ENCODE measurements at regions of chr13 and their contacts with region 1.

Region 1: DNA sequence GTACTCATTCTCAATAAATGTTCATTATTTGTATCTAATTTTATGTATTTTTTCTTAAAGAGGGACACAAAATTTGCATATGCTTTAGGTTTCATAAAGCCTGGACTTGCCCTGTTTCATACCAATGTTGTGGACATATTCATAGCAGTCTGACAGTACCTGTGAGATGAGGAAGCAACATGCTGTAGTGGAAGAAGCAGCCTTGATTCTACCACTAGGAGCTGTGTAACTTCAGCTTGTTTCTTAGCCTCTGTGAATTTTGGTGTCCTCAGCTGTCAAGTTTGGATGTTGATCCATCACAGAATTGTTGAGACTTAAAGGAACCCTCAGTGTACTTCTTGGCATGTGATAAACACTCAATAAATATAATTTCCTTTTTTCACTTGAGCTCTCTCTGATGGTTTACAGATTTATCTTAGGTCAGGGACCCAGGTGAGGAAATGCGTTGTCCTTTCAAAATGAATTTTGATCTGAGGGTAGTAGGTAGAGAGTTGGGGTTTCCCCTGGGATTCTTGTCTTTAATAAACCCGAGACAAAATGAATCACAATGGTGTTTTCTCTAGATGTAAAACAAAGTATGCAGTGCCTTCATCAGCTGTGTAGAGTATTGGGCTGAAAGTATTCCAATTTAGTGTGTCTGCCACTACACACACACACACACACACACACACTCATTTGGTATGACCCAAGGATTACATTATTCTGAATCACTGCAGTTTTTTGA is 152.1 kb downstream of the KCNRG start:
- DNase-seq: peak; percentile 24
- ATAC-seq: peak; percentile 91
- H3K4me3 Mint-ChIP-seq: no peak overlapping the region
- H3K27ac Mint-ChIP-seq: no peak overlapping the region
- H3K4me1 Mint-ChIP-seq: peaks cover 14% of the 10 kb centered on the region
- H3K27me3 Mint-ChIP-seq: peaks cover 16% of the 10 kb centered on the region

Region 2: DNA sequence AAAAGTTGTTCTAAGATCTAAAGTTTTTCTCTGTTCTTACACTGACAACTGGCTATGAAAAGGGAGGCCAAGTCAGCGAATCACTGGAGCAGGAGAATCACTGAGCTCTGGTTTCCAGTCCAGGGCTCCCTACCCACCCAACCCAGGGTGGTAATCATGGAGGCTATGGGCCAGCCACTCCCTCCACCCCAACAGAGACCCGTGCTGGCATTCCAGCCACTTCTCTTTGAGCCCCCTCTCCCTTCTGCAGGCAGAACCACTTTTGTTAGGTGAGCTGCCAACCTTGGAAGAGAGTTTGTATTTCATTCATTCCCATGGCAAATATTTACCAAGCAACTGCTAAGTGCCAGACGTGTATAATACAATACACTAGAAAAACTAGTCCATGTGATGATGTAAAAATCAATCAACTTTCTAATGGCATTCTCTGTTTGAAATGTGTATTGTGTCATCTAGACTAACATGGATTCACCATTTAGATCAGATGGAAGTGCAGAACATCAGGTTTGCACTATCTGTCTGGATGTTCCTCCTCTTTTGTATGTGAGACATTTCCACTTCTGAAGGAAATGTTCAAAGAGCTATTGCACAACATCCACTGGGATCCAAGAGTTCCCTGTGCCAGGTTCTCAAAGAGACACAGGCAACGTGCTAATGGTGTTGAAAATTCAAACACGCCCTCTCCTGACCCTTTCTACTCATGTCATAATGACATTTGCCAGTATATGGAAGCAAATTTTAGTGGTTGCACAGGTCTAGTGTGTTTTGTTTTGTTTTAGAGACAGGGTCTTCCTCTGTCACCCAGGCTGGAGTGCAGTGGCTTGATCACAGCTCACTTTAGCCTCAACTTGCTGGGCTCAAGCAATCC is 941.9 kb before region 1 on chr13:
- CTCF ChIA-PET with region 1: no interaction called
- POLR2A ChIA-PET with region 1: no interaction called
- intact Hi-C with region 1: no loop called
- DNase-seq: no peak
- ATAC-seq: no peak
- H3K4me3 Mint-ChIP-seq: no peak overlapping the region
- H3K27ac Mint-ChIP-seq: no peak overlapping the region
- H3K4me1 Mint-ChIP-seq: peaks cover 2% of the 10 kb centered on the region
- H3K27me3 Mint-ChIP-seq: peaks cover 30% of the 10 kb centered on the region

Region 3: GRCh38 chr13:50123862-50124536 is 43.4 kb before region 1 on chr13:
- CTCF ChIA-PET with region 1: interaction called, 5 read pairs
- POLR2A ChIA-PET with region 1: interaction called, 4 read pairs
- intact Hi-C with region 1: loop called in 1 of 2 experiments (anchors 2 kb)
- DNase-seq: peak; percentile 86
- ATAC-seq: peak; percentile 68
- H3K4me3 Mint-ChIP-seq: peak overlapping the region; percentile 72
- H3K27ac Mint-ChIP-seq: peak overlapping the region; percentile 89
- H3K4me1 Mint-ChIP-seq: peaks cover 49% of the 10 kb centered on the region
- H3K27me3 Mint-ChIP-seq: peaks cover 13% of the 10 kb centered on the region

Region 4: DNA sequence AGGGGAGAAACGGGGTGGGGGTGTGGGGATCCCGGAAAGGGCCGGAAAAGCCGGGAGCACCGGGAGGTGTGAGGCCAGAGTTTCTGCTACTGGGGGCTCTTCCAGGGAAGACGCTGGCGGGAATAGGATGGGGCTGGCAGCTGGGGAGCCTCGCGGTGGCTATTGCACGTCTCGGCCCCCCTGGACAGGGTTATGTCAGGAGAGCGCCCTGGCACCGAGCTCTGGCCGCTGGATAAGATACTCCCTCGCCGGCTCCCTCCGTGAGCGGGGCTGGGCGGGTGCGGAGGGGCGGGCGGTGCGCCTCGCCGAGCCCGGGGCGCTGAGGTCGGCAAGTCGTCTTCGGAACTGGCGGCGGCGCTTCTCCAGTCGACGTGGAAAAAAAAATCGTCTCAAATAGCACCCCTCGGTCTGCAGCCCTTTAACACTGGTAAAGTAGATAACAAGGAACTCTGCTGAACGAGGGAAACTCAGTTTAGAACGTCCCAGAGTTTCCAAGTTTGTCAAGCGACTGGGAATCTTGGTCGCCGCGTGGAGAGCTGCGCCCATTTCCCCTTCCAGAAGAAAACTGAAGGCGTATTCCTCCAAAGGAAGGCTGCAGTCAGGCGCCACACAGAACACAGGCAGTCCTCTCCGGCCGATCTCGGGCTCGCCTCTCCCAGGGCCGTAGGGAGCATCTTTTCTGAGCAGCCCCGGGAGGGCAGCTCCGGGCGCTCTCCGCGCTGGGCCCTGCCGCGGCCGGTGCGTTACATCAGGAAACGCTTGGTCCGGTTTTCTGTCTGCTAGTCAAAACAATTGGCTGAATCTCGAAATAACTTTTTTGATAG is 37.1 kb before region 1 on chr13:
- CTCF ChIA-PET with region 1: interaction called, 5 read pairs
- POLR2A ChIA-PET with region 1: no interaction called
- intact Hi-C with region 1: loop called (anchors 2 to 5 kb)
- DNase-seq: peak; percentile 52
- ATAC-seq: no peak
- H3K4me3 Mint-ChIP-seq: peak overlapping the region; percentile 67
- H3K27ac Mint-ChIP-seq: no peak overlapping the region
- H3K4me1 Mint-ChIP-seq: peaks cover 60% of the 10 kb centered on the region
- H3K27me3 Mint-ChIP-seq: peaks cover 63% of the 10 kb centered on the region

Region 5: GRCh38 chr13:50244713-50245574 is 77.6 kb after region 1 on chr13:
- CTCF ChIA-PET with region 1: interaction called, 4 read pairs
- POLR2A ChIA-PET with region 1: interaction called, 3 read pairs
- intact Hi-C with region 1: loop called in 1 of 2 experiments (anchors 1 kb)
- DNase-seq: peak; percentile 80
- ATAC-seq: peak; percentile 97
- H3K4me3 Mint-ChIP-seq: no peak overlapping the region
- H3K27ac Mint-ChIP-seq: no peak overlapping the region
- H3K4me1 Mint-ChIP-seq: peaks cover 36% of the 10 kb centered on the region
- H3K27me3 Mint-ChIP-seq: peaks cover 25% of the 10 kb centered on the region